CD14-positive monocyte (primary cell): ENCODE measurements at regions of chr5 and their contacts with region 1.

Region 1: DNA sequence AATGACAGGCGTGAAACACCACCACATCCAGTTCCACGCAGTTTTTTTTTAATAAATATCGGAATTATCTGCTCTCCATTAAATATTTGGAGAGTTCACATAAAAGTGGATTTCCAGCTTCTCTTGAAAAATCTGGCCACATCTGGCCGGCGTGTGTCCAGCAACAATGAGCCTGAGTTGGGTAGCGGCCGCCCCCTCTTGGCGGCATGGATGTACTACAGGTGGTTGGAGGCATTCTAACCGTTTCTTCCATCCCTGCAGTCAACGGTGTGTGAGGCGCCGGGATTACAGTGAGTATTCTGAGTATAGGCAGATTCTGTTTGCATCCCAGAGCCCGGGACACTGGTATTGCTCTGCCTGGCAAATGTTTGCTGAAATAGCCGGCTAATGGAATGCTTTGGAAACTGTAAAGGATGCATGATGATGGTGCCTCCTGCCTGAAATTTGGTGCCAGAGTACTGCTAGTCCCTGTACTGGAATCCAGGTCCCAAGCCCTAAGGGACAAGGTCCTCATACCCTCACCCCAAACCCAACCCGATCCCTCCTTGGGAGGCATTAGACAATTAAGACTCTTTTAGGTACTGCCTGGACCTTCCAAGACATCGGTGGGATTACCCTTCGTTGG is 13.6 kb upstream of the GM2A start:
- DNase-seq: peak; percentile 62 to 70 (median 69)
- H3K4me3 ChIP-seq: no peak overlapping the region
- H3K4me3 Mint-ChIP-seq: no peak overlapping the region
- H3K27ac ChIP-seq: no peak overlapping the region
- H3K27ac Mint-ChIP-seq: no peak overlapping the region
- H3K4me1 ChIP-seq: peaks cover 18 to 47% of the 10 kb centered on the region in 2 donors
- H3K4me1 Mint-ChIP-seq: peaks cover 37% of the 10 kb centered on the region
- H3K27me3 ChIP-seq: no peaks in the 10 kb centered on the region
- H3K27me3 Mint-ChIP-seq: peaks cover 0 to 10% (median 3%) of the 10 kb centered on the region in 3 donors
- CTCF ChIP-seq: peak; percentile 96

Region 2: DNA sequence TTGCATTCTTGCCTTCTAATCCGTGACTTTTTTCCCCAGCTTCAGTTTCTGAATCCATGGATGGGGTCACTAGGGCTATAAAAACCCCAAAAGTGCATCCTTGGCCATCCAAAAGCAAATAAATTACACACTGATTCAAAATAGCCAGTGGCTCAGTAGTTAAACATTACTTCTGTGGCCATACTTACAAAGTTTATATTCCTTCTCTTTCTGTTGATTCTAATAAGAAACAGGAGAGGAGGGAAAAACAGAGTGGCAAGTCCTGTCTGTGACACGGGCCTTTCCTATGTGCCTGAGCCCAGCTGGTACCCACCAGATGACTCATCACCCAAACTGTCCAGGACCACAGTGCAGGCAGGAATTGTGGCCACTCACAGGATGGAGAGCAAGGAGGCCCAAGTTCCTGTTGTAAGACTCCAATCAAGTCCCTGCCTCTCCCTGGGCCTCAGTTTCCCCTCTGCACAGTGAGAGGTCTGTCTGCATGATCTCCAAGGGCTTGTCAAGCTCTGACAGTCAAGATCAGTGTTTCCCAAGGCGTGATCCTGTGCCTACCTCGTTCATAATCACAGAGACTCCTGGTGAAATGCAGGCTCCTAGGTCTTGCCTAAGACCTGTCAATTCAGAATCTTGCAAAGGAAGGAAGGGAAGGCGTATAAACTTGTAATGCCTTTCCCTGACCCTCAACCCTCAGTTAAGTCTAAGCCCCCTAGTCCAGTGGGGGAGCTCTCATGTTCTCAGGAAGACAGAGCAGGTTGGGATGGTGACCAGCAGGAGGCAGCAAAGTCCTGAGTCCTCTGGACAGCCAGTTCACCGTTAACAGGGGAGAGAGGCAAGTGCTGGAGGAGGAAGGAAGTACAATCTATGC is 188.1 kb before region 1 on chr5:
- intact Hi-C with region 1: loop called in 1 of 2 experiments (anchors 10 kb)
- DNase-seq: peak; percentile 83 to 91 (median 88)
- H3K4me3 ChIP-seq: no peak overlapping the region
- H3K4me3 Mint-ChIP-seq: no peak overlapping the region
- H3K27ac ChIP-seq: peak overlapping the region in 1 of 2 donors; percentile 65
- H3K27ac Mint-ChIP-seq: peak overlapping the region; percentile 70 to 88 (median 79)
- H3K4me1 ChIP-seq: peaks cover 36 to 46% of the 10 kb centered on the region in 2 donors
- H3K4me1 Mint-ChIP-seq: peaks cover 45% of the 10 kb centered on the region
- H3K27me3 ChIP-seq: no peaks in the 10 kb centered on the region
- H3K27me3 Mint-ChIP-seq: no peaks in the 10 kb centered on the region
- CTCF ChIP-seq: peak; percentile 94

Region 3: DNA sequence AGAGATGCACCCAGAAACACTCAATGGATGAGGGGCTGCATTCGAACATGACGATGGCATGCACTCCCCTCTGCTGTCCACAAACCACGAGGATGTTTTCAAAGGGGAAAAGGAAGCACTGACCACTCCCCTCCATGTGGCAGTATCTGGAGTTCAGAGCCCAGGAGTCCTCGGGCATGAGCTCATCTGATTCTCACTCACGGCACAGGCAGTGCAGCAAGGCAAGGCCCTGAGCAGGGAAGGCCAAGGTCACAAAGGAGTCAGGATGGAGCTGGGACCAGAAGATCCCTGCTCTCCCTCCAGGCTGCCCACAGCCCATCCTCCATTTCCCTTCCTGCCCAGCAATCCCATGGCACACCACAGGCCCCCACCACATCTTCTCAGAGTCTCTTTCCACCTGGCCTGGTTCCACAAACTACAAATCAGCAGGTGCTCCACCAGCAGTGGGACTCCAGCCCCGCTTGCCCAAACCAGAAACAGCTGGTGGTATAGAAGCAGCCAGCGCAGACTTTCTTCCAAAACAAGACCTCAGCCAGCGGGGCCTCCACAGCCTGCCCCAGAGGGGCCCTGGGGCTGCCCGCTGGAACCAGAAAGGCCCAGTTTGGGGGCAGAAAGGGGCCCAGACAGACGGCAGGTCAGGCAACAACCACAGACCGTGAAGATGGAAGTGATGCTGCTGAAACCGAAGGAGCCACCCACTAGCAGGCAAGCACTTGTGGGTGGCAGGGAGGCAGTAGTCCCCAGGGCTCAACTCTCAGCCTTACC is 170.7 kb before region 1 on chr5:
- intact Hi-C with region 1: no loop called
- DNase-seq: peak in 1 of 3 donors; percentile 60
- H3K4me3 ChIP-seq: no peak overlapping the region
- H3K4me3 Mint-ChIP-seq: no peak overlapping the region
- H3K27ac ChIP-seq: peak overlapping the region in 1 of 2 donors; percentile 12
- H3K27ac Mint-ChIP-seq: peak overlapping the region in 4 of 7 donors; percentile 23 to 65 (median 36)
- H3K4me1 ChIP-seq: peaks cover 53 to 64% of the 10 kb centered on the region in 2 donors
- H3K4me1 Mint-ChIP-seq: peaks cover 79% of the 10 kb centered on the region
- H3K27me3 ChIP-seq: no peaks in the 10 kb centered on the region
- H3K27me3 Mint-ChIP-seq: no peaks in the 10 kb centered on the region
- CTCF ChIP-seq: no peak

Region 4: GRCh38 chr5:151126199-151126645 is 113.1 kb before region 1 on chr5:
- intact Hi-C with region 1: loop called (anchors 5 kb)
- DNase-seq: peak; percentile 70 to 77 (median 71)
- H3K4me3 ChIP-seq: peak overlapping the region in 1 of 3 experiments; percentile 35
- H3K4me3 Mint-ChIP-seq: peak overlapping the region in 1 of 2 donors; percentile 18
- H3K27ac ChIP-seq: peak overlapping the region; percentile 50 to 65
- H3K27ac Mint-ChIP-seq: peak overlapping the region; percentile 87 to 96 (median 91)
- H3K4me1 ChIP-seq: peaks cover 27 to 32% of the 10 kb centered on the region in 2 donors
- H3K4me1 Mint-ChIP-seq: peaks cover 36% of the 10 kb centered on the region
- H3K27me3 ChIP-seq: no peaks in the 10 kb centered on the region
- H3K27me3 Mint-ChIP-seq: no peaks in the 10 kb centered on the region
- CTCF ChIP-seq: peak; percentile 87

Region 5: DNA sequence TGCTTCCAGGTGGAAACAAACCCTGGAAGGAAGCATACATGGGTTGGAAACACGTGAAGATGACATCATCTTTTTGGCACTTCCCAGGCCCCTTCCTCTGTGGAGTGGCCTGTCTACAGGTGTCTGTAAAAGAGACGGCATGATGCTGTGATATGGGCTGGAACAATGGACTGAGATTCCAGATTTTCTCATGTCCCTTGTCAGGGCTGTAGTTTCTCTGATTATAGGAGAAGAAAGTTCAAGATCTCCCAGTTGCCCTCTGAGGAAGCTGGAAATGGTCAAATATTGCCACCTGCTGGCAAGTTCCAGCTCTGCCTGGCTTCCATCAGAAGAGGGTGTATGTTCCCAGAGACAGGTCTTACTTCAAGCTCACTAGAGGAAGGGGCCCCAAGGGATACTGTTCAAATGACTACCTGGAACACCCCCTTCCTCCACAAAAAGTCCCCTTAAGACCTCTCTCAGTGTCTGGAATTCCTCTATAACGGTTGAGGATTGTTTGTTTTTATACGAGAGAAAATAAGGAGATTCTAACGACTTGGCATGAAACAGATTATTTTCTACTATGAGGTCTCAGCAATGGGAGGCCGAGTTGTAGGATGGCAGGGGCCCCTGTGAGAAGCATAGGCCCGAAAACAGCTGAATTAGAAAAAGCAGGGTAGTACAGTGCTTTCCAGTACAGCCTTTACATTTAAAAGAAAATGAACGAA is 74.5 kb before region 1 on chr5:
- intact Hi-C with region 1: loop called (anchors 2 to 10 kb)
- DNase-seq: peak; percentile 69 to 79 (median 74)
- H3K4me3 ChIP-seq: no peak overlapping the region
- H3K4me3 Mint-ChIP-seq: no peak overlapping the region
- H3K27ac ChIP-seq: no peak overlapping the region
- H3K27ac Mint-ChIP-seq: peak overlapping the region in 1 of 7 donors; percentile 44
- H3K4me1 ChIP-seq: peaks cover 7 to 13% of the 10 kb centered on the region in 2 donors
- H3K4me1 Mint-ChIP-seq: peaks cover 15% of the 10 kb centered on the region
- H3K27me3 ChIP-seq: no peaks in the 10 kb centered on the region
- H3K27me3 Mint-ChIP-seq: peaks cover 0 to 2% (median 0%) of the 10 kb centered on the region in 3 donors
- CTCF ChIP-seq: peak; percentile 91

Region 6: DNA sequence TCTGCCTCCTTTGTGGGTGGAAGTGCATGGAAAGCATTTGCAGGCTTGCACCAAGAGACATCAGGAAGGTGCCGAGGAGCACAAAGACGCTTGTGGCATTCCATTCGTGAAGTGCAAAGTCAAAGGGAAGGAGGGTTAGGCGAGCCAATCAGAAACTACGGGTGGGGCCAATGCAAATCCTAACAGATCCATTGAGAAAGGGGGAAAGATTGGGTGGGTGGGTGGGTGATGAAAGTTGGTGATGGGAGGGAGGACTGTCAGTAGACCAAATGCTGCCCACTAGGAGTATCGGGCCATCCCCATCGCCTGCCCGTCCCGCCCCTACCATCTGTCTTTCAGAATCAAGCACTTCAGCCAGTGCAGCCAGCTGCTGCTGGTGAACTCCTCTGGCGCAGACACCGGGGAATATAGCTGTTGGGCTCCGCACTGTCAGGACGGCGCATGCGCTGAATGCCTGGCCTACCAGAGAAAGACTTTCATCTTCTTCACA is 64.7 kb before region 1 on chr5:
- intact Hi-C with region 1: loop called in 1 of 2 experiments (anchors 10 kb)
- DNase-seq: no peak
- H3K4me3 ChIP-seq: no peak overlapping the region
- H3K4me3 Mint-ChIP-seq: no peak overlapping the region
- H3K27ac ChIP-seq: no peak overlapping the region
- H3K27ac Mint-ChIP-seq: no peak overlapping the region
- H3K4me1 ChIP-seq: peaks cover 21 to 29% of the 10 kb centered on the region in 2 donors
- H3K4me1 Mint-ChIP-seq: peaks cover 37% of the 10 kb centered on the region
- H3K27me3 ChIP-seq: no peaks in the 10 kb centered on the region
- H3K27me3 Mint-ChIP-seq: peaks cover 0 to 1% (median 0%) of the 10 kb centered on the region in 3 donors
- CTCF ChIP-seq: no peak

Region 7: GRCh38 chr5:151186538-151186937 is 52.8 kb before region 1 on chr5:
- intact Hi-C with region 1: no loop called
- DNase-seq: no peak
- H3K4me3 ChIP-seq: no peak overlapping the region
- H3K4me3 Mint-ChIP-seq: no peak overlapping the region
- H3K27ac ChIP-seq: no peak overlapping the region
- H3K27ac Mint-ChIP-seq: peak overlapping the region in 1 of 7 donors; percentile 77
- H3K4me1 ChIP-seq: no peaks in the 10 kb centered on the region
- H3K4me1 Mint-ChIP-seq: peaks cover 8% of the 10 kb centered on the region
- H3K27me3 ChIP-seq: no peaks in the 10 kb centered on the region
- H3K27me3 Mint-ChIP-seq: peaks cover 0 to 2% (median 0%) of the 10 kb centered on the region in 3 donors
- CTCF ChIP-seq: no peak

Region 8: DNA sequence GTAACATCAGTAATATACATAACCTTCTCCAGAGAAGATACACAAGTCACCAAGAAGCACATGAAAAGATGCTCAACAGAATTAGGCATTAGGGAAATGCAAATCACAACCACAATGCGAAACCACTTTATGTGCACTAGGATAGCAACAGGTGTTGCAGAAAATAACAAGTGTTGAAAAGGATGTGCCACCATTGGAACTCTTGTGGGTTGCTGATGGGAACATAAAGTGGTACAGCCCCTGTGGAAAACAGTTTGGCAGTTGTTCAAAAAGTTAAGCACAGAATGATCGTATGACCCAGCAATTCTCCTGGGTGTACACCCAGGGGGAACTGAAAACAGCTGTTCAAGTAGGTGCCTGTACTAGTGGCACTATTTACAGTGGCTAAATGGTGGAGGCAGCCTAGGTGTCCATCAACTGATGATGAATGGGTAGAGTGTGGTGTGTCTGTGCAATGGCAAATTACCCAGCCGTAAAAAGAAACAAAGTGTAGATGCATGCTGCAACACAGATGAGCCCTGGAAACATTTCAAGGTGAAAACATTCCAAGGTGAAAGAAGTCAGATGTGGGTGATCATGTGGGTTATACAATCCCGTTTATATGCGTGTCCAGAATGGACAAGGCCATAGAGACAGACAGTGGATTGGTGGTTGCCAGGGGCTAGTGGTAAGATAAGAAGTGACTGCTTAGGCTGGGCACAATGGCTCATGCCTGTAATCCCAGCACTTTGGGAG is 42.6 kb before region 1 on chr5:
- intact Hi-C with region 1: loop called in 1 of 2 experiments (anchors 5 kb)
- DNase-seq: peak in 1 of 3 donors; percentile 25
- H3K4me3 ChIP-seq: peak overlapping the region in 1 of 3 experiments; percentile 7
- H3K4me3 Mint-ChIP-seq: peak overlapping the region in 1 of 2 donors; percentile 53
- H3K27ac ChIP-seq: peak overlapping the region; percentile 48 to 65
- H3K27ac Mint-ChIP-seq: peak overlapping the region; percentile 75 to 91 (median 89)
- H3K4me1 ChIP-seq: peaks cover 27 to 32% of the 10 kb centered on the region in 2 donors
- H3K4me1 Mint-ChIP-seq: peaks cover 42% of the 10 kb centered on the region
- H3K27me3 ChIP-seq: no peaks in the 10 kb centered on the region
- H3K27me3 Mint-ChIP-seq: peaks cover 0 to 4% (median 3%) of the 10 kb centered on the region in 3 donors
- CTCF ChIP-seq: no peak

Region 9: DNA sequence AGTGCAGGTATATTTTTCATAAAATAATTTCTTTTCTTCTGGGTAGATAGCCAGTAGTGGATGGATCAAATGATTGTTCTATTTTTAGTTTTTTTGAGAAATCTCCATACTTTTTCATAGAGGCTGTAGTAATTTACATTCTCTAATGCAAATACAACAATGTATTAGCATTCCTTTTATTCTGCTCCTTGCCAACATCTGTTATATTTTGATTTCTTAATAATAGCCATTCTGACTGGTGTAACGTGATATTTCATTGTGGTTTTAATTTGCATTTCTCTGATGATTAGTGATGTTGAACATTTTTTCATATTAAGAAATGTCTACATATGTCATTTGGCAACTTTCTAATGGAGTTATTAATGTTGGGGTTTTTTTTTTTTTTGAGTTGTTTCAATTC is 135.2 kb after region 1 on chr5:
- intact Hi-C with region 1: no loop called
- DNase-seq: no peak
- H3K4me3 ChIP-seq: no peak overlapping the region
- H3K4me3 Mint-ChIP-seq: no peak overlapping the region
- H3K27ac ChIP-seq: no peak overlapping the region
- H3K27ac Mint-ChIP-seq: no peak overlapping the region
- H3K4me1 ChIP-seq: no peaks in the 10 kb centered on the region
- H3K4me1 Mint-ChIP-seq: no peaks in the 10 kb centered on the region
- H3K27me3 ChIP-seq: no peaks in the 10 kb centered on the region
- H3K27me3 Mint-ChIP-seq: peaks cover 2% of the 10 kb centered on the region in 3 donors
- CTCF ChIP-seq: no peak